Psoas muscle (tissue), 8 donors: ENCODE measurements at regions of chr19 and their contacts with region 1.

Region 1: DNA sequence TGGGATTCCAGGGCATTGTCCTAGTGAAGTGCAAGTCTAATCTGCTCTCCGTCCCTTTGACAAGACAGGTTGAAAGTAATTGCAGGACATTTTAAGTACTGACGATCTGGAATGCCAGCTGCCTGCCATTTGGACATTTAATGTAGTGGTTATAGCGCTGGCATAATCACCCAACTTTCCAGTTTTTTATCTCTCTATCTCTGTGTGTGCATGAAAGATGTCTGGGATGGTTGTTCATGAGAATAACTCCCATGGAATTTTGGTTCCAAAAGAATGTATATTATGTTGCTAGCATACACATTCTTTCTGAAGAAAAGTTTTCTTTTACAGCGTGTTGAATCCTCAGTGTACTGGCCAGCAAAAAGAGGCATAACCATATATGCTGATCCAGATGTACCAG is 53.6 kb downstream of the TDRD12 start:
- DNase-seq: no peak
- ATAC-seq: no peak
- H3K4me3 ChIP-seq: no peak overlapping the region
- H3K27ac ChIP-seq: no peak overlapping the region
- H3K4me1 ChIP-seq: no peaks in the 10 kb centered on the region
- H3K27me3 ChIP-seq: no peaks in the 10 kb centered on the region
- CTCF ChIP-seq: no peak

Region 2: DNA sequence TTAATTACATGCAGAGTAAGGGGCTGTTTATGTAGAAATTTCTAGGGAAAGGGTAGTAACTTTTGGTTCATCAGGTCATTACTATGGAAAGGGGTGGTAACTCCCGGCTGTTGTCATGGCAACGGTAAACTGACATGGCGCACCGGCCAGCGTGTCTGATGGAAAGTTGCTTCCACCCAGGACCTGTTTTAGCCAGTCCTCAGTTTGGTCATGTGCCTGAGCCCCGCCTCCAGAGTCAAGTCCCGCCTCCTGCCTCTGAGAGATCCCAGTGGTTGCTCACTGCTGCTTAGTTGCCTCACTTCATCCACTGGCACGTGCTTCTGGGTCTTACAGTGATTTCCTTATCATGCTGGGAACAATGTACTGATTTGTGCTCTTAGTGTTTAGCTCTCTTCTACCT is 882.9 kb before region 1 on chr19:
- intact Hi-C with region 1: no loop called
- DNase-seq: no peak
- ATAC-seq: no peak
- H3K4me3 ChIP-seq: no peak overlapping the region
- H3K27ac ChIP-seq: no peak overlapping the region
- H3K4me1 ChIP-seq: no peaks in the 10 kb centered on the region
- H3K27me3 ChIP-seq: no peaks in the 10 kb centered on the region
- CTCF ChIP-seq: no peak

Region 3: GRCh38 chr19:32475141-32476031 is 297.7 kb before region 1 on chr19:
- intact Hi-C with region 1: loop called in 1 of 2 experiments (anchors 5 kb)
- DNase-seq: no peak
- ATAC-seq: no peak
- H3K4me3 ChIP-seq: no peak overlapping the region
- H3K27ac ChIP-seq: no peak overlapping the region
- H3K4me1 ChIP-seq: no peaks in the 10 kb centered on the region
- H3K27me3 ChIP-seq: no peaks in the 10 kb centered on the region
- CTCF ChIP-seq: no peak